ENCODE measurements at regions of chr10 and their contacts with region 1.

Region 1: DNA sequence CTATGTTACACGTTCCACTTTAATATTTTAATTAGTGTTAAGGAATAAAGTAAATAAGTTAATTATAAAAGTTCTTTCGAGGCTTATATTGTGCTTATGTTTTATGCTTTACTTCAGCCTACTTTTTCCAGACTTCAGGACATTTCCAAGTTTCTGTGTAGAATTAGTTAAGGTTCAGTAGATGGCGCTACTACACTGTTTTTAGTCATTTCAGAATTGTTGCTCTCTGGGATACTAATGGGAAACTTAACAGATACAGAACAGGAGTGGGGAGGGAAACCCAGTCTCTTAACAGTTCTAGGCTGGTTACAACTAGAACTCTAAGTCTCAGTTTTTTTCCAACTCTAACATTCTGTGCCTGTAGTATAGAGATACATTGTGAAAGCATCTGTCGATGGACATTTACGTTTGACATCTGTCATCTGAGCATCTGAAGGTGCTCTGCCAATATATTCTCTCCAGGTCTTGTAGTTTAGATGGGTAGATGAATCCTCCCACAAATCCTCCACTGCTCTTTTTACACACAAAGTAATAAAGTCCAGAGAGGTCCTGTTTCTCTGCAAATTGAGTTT is 56.8 kb upstream of the FAM171A1 start:
- DNase-seq: peak; percentile 67
- H3K4me3 ChIP-seq: no peak overlapping the region
- H3K27ac ChIP-seq: no peak overlapping the region
- H3K4me1 ChIP-seq: peaks cover 3% of the 10 kb centered on the region
- H3K27me3 ChIP-seq: peaks cover 0 to 2% of the 10 kb centered on the region in 2 experiments
- CTCF ChIP-seq: peak; percentile 33 to 36
- POLR2A ChIP-seq: no peak

Region 2: GRCh38 chr10:15439341-15439842 is 11.5 kb after region 1 on chr10:
- CTCF ChIA-PET with region 1: interaction called, 12 read pairs
- POLR2A ChIA-PET with region 1: no interaction called
- dilution Hi-C with region 1: no loop called
- intact Hi-C with region 1: no loop called
- DNase-seq: peak; percentile 62
- H3K4me3 ChIP-seq: peak overlapping the region in 2 of 3 experiments; percentile 1 to 18
- H3K27ac ChIP-seq: peak overlapping the region; percentile 25
- H3K4me1 ChIP-seq: peaks cover 13% of the 10 kb centered on the region
- H3K27me3 ChIP-seq: peaks cover 0 to 3% of the 10 kb centered on the region in 2 experiments
- CTCF ChIP-seq: peak; percentile 41 to 59
- POLR2A ChIP-seq: no peak

Region 3: DNA sequence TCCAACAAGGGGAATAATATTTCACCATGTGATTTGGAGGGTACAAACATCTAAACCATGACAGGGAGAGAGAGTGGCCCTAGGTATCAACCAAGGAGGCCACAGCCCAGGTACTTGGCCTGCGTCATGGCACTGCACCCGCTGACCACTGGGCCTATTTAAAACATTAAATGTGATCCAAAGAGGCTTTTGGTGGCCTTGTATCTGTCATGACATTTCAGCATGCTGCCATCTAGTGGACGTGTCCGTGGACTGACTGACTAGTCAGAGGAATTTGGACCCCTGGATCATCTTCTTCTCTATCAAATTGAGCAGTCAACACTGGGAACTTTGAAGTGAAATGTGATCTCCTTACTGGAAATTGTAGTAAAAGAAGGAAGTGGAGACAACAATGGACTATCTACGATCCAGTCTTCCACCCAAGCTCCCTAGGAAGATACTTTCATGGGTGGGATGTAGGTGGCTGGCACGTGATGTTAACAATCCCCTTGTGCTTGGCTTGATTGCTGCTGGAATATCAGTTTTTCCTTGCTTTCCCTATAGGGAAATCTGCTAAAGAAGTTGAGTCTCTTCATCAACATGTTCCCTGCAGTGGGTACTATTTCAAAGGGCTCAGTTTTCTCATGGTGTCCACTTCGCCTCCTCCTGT is 316.4 kb after region 1 on chr10:
- CTCF ChIA-PET with region 1: interaction called, 14 read pairs
- POLR2A ChIA-PET with region 1: no interaction called
- dilution Hi-C with region 1: no loop called
- intact Hi-C with region 1: loop called (anchors 1 kb)
- DNase-seq: peak; percentile 58
- H3K4me3 ChIP-seq: no peak overlapping the region
- H3K27ac ChIP-seq: no peak overlapping the region
- H3K4me1 ChIP-seq: no peaks in the 10 kb centered on the region
- H3K27me3 ChIP-seq: peaks cover 7 to 11% of the 10 kb centered on the region in 2 experiments
- CTCF ChIP-seq: peak; percentile 63 to 73
- POLR2A ChIP-seq: no peak

Measured in endothelial cell of umbilical vein (primary cell).